GM12878 (cell line): ENCODE measurements at regions of chr12 and their contacts with region 1.

Region 1: DNA sequence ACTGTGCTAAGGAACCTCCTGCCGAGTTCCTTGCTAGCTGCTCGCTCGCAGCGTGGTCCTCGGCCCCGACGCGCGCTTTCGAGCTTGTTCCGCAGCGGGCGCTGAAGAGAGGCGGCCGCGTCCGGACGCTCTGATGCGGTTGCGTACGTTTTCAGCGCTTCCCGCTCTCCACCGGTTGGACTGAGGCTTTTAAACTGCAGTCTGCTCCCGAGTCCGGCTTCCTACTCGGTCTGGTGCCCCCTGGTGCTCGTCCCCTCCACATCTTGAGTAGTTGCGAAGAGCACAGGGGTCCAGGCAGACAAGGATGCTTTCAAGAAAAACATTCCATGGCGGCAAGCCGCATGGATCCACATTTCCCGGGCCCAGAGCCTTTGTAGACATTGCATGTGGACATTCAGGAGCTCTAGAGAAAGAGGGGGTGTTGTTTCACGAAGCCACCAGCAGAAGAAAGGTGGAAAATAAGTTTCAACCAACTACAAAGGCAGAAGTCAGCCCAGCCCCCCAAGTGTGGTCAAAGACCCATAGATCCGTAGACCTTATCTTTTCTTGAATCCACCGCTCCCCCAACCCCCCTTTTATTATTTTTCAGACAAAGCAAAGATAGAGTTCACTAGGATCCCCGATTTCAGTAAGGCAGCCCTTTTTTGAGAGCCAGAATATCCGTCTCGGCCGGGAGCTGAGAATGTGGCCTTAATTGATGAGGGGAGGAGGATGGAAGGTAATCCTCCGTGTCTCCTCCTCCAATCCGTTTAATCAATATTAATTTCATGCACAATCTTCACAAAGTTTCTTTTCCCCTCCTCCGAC is 984 bp upstream of the WNK1 start:
- DNase-seq: peak; percentile 94
- ATAC-seq: peak; percentile 60
- H3K4me3 ChIP-seq: peak overlapping the region; percentile 75
- H3K27ac ChIP-seq: peak overlapping the region; percentile 79
- H3K4me1 ChIP-seq: no peaks in the 10 kb centered on the region; the same call in 1 of the 2 replicates
- H3K27me3 ChIP-seq: no peaks in the 10 kb centered on the region
- CTCF ChIP-seq: peak; percentile 73 to 84 (median 78)
- EP300 ChIP-seq: no peak
- POLR2A ChIP-seq: peak; percentile 89
- RAD21 ChIP-seq: peak; percentile 76

Region 2: DNA sequence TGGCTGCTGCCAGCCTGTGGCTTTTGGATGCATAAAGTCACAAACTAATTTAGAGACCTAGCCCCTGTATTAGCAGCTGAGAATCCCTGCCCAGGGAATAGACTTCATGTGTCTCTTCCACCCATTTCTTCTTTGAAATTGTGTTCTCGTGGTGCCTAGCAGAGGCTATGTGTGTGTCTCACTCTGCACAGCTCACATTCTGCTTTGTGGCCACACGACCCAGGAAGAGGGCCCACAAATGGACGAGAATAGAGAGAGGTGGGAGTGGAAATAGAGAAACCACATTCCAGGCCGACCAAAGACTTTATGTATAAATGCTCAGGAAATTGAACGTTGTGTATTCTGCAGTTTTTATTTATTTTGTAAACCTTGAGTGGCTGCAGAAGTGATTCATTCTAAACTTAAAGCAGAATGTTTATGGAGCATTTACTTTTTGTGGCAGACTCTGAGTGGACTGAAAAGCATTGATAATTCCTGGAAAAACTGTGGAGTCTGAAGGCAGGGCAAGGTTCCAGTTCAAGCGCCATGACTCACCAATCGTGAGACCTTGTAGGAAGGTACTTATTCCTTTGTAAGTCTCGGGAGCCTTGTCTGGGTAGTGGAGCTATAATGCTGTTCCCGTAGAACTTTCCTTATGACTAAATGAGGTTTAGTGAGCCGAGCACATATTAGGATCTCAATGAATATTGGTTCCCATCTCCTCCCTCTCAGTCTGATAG is 282.6 kb before region 1 on chr12:
- CTCF ChIA-PET with region 1: no interaction called
- POLR2A ChIA-PET with region 1: no interaction called
- RAD21 ChIA-PET with region 1: no interaction called
- SMC1A ChIA-PET with region 1: no interaction called
- in situ Hi-C with region 1: no loop called
- intact Hi-C with region 1: no loop called
- DNase-seq: no peak
- ATAC-seq: no peak
- H3K4me3 ChIP-seq: no peak overlapping the region
- H3K27ac ChIP-seq: no peak overlapping the region
- H3K4me1 ChIP-seq: no peaks in the 10 kb centered on the region
- H3K27me3 ChIP-seq: peaks cover 0 to 1% of the 10 kb centered on the region in 2 experiments; a peak in 1 of 4 replicates
- CTCF ChIP-seq: no peak
- EP300 ChIP-seq: no peak
- POLR2A ChIP-seq: no peak
- RAD21 ChIP-seq: no peak

Region 3: DNA sequence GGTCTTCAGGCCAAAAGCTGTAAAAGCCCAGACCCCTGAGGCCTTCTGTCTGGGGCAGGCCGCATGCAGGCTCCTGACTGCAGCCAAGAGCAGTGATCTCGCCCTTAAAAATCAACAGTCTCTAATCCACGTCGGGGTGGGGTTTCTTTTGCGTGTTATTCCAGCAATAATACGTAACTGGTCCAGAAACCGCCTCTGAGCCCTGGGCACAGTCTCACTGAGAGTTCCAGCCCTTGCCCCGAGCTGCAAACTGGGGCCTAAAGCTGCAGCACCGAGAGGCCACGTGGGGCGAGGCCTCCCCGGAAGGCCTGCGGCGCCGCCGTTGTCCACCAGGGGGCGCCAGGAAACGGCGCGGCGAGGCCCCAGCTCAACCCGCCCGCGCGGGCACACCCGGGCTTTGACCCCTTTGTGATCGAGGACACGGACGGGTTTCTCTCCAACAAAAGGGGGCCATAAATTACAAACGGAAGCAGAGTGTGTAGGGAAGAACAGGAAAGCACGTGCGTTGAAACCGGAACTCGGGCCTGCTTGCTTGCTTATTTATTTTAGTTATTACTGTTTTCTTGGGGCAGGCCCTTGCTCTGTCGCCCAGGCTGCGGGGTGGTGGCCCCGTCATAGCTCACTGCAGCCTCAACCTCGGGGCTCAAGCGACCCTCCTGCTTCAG is 175.3 kb before region 1 on chr12:
- CTCF ChIA-PET with region 1: interaction called, 46 read pairs
- POLR2A ChIA-PET with region 1: interaction called, 14 read pairs
- RAD21 ChIA-PET with region 1: interaction called, 51 read pairs
- SMC1A ChIA-PET with region 1: interaction called, 38 read pairs
- in situ Hi-C with region 1: loop called (anchors 5 kb)
- intact Hi-C with region 1: loop called (anchors 1 kb)
- DNase-seq: peak; percentile 40
- ATAC-seq: peak; percentile 99
- H3K4me3 ChIP-seq: no peak overlapping the region
- H3K27ac ChIP-seq: peak overlapping the region; percentile 26
- H3K4me1 ChIP-seq: peaks cover 10% of the 10 kb centered on the region
- H3K27me3 ChIP-seq: no peaks in the 10 kb centered on the region
- CTCF ChIP-seq: peak; percentile 90 to 99 (median 96)
- EP300 ChIP-seq: no peak
- POLR2A ChIP-seq: peak; percentile 59
- RAD21 ChIP-seq: peak; percentile 79

Region 4: GRCh38 chr12:630656-631632 is 120.5 kb before region 1 on chr12:
- CTCF ChIA-PET with region 1: interaction called, 14 read pairs
- POLR2A ChIA-PET with region 1: interaction called, 19 read pairs
- RAD21 ChIA-PET with region 1: interaction called, 46 read pairs
- SMC1A ChIA-PET with region 1: interaction called, 36 read pairs
- in situ Hi-C with region 1: no loop called
- intact Hi-C with region 1: no loop called
- DNase-seq: no peak
- ATAC-seq: peak; percentile 98
- H3K4me3 ChIP-seq: peak overlapping the region; percentile 60
- H3K27ac ChIP-seq: peak overlapping the region; percentile 92
- H3K4me1 ChIP-seq: peaks cover 16% of the 10 kb centered on the region
- H3K27me3 ChIP-seq: no peaks in the 10 kb centered on the region
- CTCF ChIP-seq: no peak
- EP300 ChIP-seq: no peak
- POLR2A ChIP-seq: peak; percentile 86
- RAD21 ChIP-seq: no peak

Region 5: GRCh38 chr12:650983-651382 is 100.4 kb before region 1 on chr12:
- CTCF ChIA-PET with region 1: interaction called, 5 read pairs
- POLR2A ChIA-PET with region 1: interaction called, 7 read pairs
- RAD21 ChIA-PET with region 1: interaction called, 7 read pairs
- SMC1A ChIA-PET with region 1: interaction called, 12 read pairs
- in situ Hi-C with region 1: no loop called
- intact Hi-C with region 1: no loop called
- DNase-seq: no peak
- ATAC-seq: peak; percentile 64
- H3K4me3 ChIP-seq: no peak overlapping the region
- H3K27ac ChIP-seq: no peak overlapping the region
- H3K4me1 ChIP-seq: peaks cover 30% of the 10 kb centered on the region
- H3K27me3 ChIP-seq: no peaks in the 10 kb centered on the region
- CTCF ChIP-seq: peak; percentile 27 to 38 (median 31); a peak in 4 of 6 replicates
- EP300 ChIP-seq: no peak
- POLR2A ChIP-seq: no peak
- RAD21 ChIP-seq: peak; percentile 57

Region 6: GRCh38 chr12:685388-685787 is 66.0 kb before region 1 on chr12:
- CTCF ChIA-PET with region 1: interaction called, 38 read pairs
- POLR2A ChIA-PET with region 1: interaction called, 118 read pairs
- RAD21 ChIA-PET with region 1: interaction called, 396 read pairs
- SMC1A ChIA-PET with region 1: interaction called, 68 read pairs
- in situ Hi-C with region 1: no loop called
- intact Hi-C with region 1: no loop called
- DNase-seq: peak; percentile 88
- ATAC-seq: peak; percentile 84
- H3K4me3 ChIP-seq: peak overlapping the region; percentile 37; the same call in 1 of the 2 replicates
- H3K27ac ChIP-seq: peak overlapping the region; percentile 73
- H3K4me1 ChIP-seq: peaks cover 39% of the 10 kb centered on the region
- H3K27me3 ChIP-seq: no peaks in the 10 kb centered on the region
- CTCF ChIP-seq: no peak
- EP300 ChIP-seq: peak; percentile 44 to 64; a peak in 2 of 4 replicates
- POLR2A ChIP-seq: 0 out of 2 replicates have a peak, but pooled peaks have one; percentile 40
- RAD21 ChIP-seq: no peak

Region 7: GRCh38 chr12:737122-737739 is 14.2 kb before region 1 on chr12:
- CTCF ChIA-PET with region 1: interaction called, 9 read pairs
- POLR2A ChIA-PET with region 1: interaction called, 10 read pairs
- RAD21 ChIA-PET with region 1: interaction called, 11 read pairs
- SMC1A ChIA-PET with region 1: interaction called, 16 read pairs
- in situ Hi-C with region 1: no loop called
- intact Hi-C with region 1: no loop called
- DNase-seq: no peak
- ATAC-seq: no peak
- H3K4me3 ChIP-seq: no peak overlapping the region
- H3K27ac ChIP-seq: no peak overlapping the region
- H3K4me1 ChIP-seq: no peaks in the 10 kb centered on the region
- H3K27me3 ChIP-seq: no peaks in the 10 kb centered on the region
- CTCF ChIP-seq: no peak
- EP300 ChIP-seq: no peak
- POLR2A ChIP-seq: no peak
- RAD21 ChIP-seq: no peak

Region 8: GRCh38 chr12:810671-811415 is 59.4 kb after region 1 on chr12:
- CTCF ChIA-PET with region 1: interaction called, 102 read pairs
- POLR2A ChIA-PET with region 1: interaction called, 16 read pairs
- RAD21 ChIA-PET with region 1: interaction called, 45 read pairs
- SMC1A ChIA-PET with region 1: interaction called, 73 read pairs
- in situ Hi-C with region 1: no loop called
- intact Hi-C with region 1: loop called (anchors 2 kb)
- DNase-seq: no peak
- ATAC-seq: peak; percentile 78
- H3K4me3 ChIP-seq: peak overlapping the region; percentile 5; the same call in 1 of the 2 replicates
- H3K27ac ChIP-seq: peak overlapping the region; percentile 9; the same call in 1 of the 2 replicates
- H3K4me1 ChIP-seq: peaks cover 49% of the 10 kb centered on the region
- H3K27me3 ChIP-seq: no peaks in the 10 kb centered on the region
- CTCF ChIP-seq: no peak
- EP300 ChIP-seq: peak; percentile 61 to 70; a peak in 2 of 4 replicates
- POLR2A ChIP-seq: no peak
- RAD21 ChIP-seq: no peak

Region 9: GRCh38 chr12:998020-998874 is 246.9 kb after region 1 on chr12:
- CTCF ChIA-PET with region 1: no interaction called
- POLR2A ChIA-PET with region 1: no interaction called
- RAD21 ChIA-PET with region 1: no interaction called
- SMC1A ChIA-PET with region 1: no interaction called
- in situ Hi-C with region 1: no loop called
- intact Hi-C with region 1: no loop called
- DNase-seq: no peak
- ATAC-seq: peak; percentile 84
- H3K4me3 ChIP-seq: no peak overlapping the region
- H3K27ac ChIP-seq: no peak overlapping the region
- H3K4me1 ChIP-seq: peaks cover 21% of the 10 kb centered on the region
- H3K27me3 ChIP-seq: no peaks in the 10 kb centered on the region
- CTCF ChIP-seq: no peak
- EP300 ChIP-seq: no peak
- POLR2A ChIP-seq: no peak
- RAD21 ChIP-seq: no peak